ENCODE measurements at regions of chr11 and their contacts with region 1.

Region 1: GRCh38 chr11:14907411-14908213 is 15.6 kb upstream of the CYP2R1 start:
- DNase-seq: peak; percentile 74 to 81 (median 76)
- H3K4me3 ChIP-seq: no peak overlapping the region
- H3K4me3 Mint-ChIP-seq: peak overlapping the region in 4 of 8 donors; percentile 21 to 53 (median 40)
- H3K27ac ChIP-seq: no peak overlapping the region
- H3K27ac Mint-ChIP-seq: peak overlapping the region; percentile 6 to 94 (median 69)
- H3K4me1 ChIP-seq: peaks cover 29% of the 10 kb centered on the region
- H3K4me1 Mint-ChIP-seq: peaks cover 22 to 50% (median 34%) of the 10 kb centered on the region in 4 donors
- H3K27me3 ChIP-seq: no peaks in the 10 kb centered on the region
- H3K27me3 Mint-ChIP-seq: no peaks in the 10 kb centered on the region

Region 2: DNA sequence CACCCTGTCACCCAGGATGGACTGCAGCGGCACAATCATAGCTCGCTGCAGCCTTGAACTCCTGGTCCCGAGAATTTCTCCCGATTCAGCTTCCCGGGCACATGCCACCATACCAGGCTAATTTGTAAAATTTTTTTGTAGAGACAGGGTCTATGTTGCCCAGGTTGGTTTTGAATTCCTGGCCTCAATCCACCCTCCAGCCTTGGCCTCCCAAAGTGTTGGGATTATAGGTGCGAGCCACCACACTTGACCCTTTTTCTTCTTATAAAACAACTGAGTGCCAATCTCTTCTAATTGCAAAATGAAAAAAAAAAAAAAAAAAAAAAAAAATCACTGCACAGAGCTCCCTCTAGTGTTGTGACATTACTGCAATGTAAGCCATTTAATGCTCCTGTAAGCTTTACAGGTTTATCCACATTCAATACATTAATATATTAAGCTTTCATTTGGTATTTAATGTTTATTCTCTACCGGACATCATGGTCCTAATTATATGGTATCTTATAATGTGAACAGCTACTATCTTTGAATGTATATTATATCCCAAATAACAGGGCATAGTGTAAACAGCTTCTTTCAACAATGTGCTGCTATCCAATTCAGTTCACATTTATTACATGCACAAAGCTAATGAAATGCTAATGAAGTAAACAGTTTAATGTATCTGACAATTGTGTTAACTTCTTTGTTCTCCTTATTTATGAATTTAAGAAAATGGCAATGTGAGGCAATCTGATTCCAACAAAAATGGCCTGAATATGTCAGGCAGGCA is 452.6 kb before region 1 on chr11:
- CTCF ChIA-PET with region 1: interaction called, 19 read pairs
- POLR2A ChIA-PET with region 1: no interaction called
- intact Hi-C with region 1: no loop called
- DNase-seq: peak in 4 of 5 donors; percentile 14 to 29 (median 18)
- H3K4me3 ChIP-seq: no peak overlapping the region
- H3K4me3 Mint-ChIP-seq: no peak overlapping the region
- H3K27ac ChIP-seq: no peak overlapping the region
- H3K27ac Mint-ChIP-seq: peak overlapping the region in 4 of 7 donors; percentile 22 to 63 (median 41)
- H3K4me1 ChIP-seq: no peaks in the 10 kb centered on the region
- H3K4me1 Mint-ChIP-seq: peaks cover 0 to 3% (median 1%) of the 10 kb centered on the region in 4 donors
- H3K27me3 ChIP-seq: no peaks in the 10 kb centered on the region
- H3K27me3 Mint-ChIP-seq: no peaks in the 10 kb centered on the region

Region 3: GRCh38 chr11:14537134-14537599 is 370.4 kb before region 1 on chr11:
- CTCF ChIA-PET with region 1: interaction called, 57 read pairs
- POLR2A ChIA-PET with region 1: no interaction called
- intact Hi-C with region 1: loop called (anchors 1 kb)
- DNase-seq: peak; percentile 49 to 69 (median 65)
- H3K4me3 ChIP-seq: peak overlapping the region in 1 of 2 donors; percentile 23
- H3K4me3 Mint-ChIP-seq: peak overlapping the region; percentile 69 to 90 (median 82)
- H3K27ac ChIP-seq: peak overlapping the region; percentile 48
- H3K27ac Mint-ChIP-seq: peak overlapping the region; percentile 77 to 97 (median 92)
- H3K4me1 ChIP-seq: peaks cover 5% of the 10 kb centered on the region
- H3K4me1 Mint-ChIP-seq: peaks cover 3 to 14% (median 4%) of the 10 kb centered on the region in 4 donors
- H3K27me3 ChIP-seq: no peaks in the 10 kb centered on the region
- H3K27me3 Mint-ChIP-seq: no peaks in the 10 kb centered on the region

Region 4: DNA sequence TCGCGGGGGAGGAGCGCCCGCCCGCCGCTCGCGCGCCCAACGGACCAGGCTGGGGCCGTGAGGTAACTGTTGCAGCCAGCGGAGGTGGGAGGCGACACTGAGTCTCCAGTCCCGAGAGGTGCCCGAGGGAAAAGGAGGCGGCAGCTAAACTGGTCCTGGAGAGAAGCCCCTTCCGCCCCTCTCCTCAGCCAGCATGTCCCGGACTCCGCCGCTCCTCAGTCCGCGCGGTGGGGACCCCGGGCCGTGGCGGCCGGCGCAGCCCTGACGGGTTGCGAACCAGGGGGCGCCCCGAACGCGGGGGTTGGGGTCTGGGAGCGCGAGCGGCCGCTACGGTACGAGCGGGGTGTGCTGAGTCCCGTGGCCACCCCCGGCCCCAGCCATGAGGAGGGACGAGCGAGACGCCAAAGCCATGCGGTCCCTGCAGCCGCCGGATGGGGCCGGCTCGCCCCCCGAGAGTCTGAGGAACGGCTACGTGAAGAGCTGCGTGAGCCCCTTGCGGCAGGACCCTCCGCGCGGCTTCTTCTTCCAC is 263.9 kb before region 1 on chr11 and contains the start of gene PDE3B:
- CTCF ChIA-PET with region 1: interaction called, 37 read pairs
- POLR2A ChIA-PET with region 1: interaction called, 17 read pairs
- intact Hi-C with region 1: loop called (anchors 1 kb)
- DNase-seq: peak; percentile 65 to 71 (median 65)
- H3K4me3 ChIP-seq: peak within 1 kb of the TSS; percentile 89 to 95
- H3K4me3 Mint-ChIP-seq: peak within 1 kb of the TSS; percentile 91 to 97 (median 95)
- H3K27ac ChIP-seq: peak within 1 kb of the TSS; percentile 68
- H3K27ac Mint-ChIP-seq: peak within 1 kb of the TSS; percentile 79 to 94 (median 91)
- H3K4me1 ChIP-seq: peaks cover 65% of the 10 kb centered on the region
- H3K4me1 Mint-ChIP-seq: peaks cover 43 to 65% (median 54%) of the 10 kb centered on the region in 4 donors
- H3K27me3 ChIP-seq: no peaks in the 10 kb centered on the region
- H3K27me3 Mint-ChIP-seq: peaks cover 0 to 2% of the 10 kb centered on the region in 2 donors
- total RNA-seq, gene PDE3B: 219 to 222 TPM

Region 5: GRCh38 chr11:14892036-14892567 is 15.5 kb before region 1 on chr11 and contains the start of gene CYP2R1:
- CTCF ChIA-PET with region 1: interaction called, 143 read pairs
- POLR2A ChIA-PET with region 1: interaction called, 39 read pairs
- intact Hi-C with region 1: loop called (anchors 1 kb)
- DNase-seq: peak; percentile 88 to 92 (median 91)
- H3K4me3 ChIP-seq: peak within 1 kb of the TSS; percentile 91 to 96
- H3K4me3 Mint-ChIP-seq: peak within 1 kb of the TSS; percentile 90 to 99 (median 94)
- H3K27ac ChIP-seq: peak within 1 kb of the TSS; percentile 80
- H3K27ac Mint-ChIP-seq: peak within 1 kb of the TSS; percentile 94 to 99 (median 96)
- H3K4me1 ChIP-seq: peaks cover 36% of the 10 kb centered on the region
- H3K4me1 Mint-ChIP-seq: peaks cover 17 to 48% (median 34%) of the 10 kb centered on the region in 4 donors
- H3K27me3 ChIP-seq: no peaks in the 10 kb centered on the region
- H3K27me3 Mint-ChIP-seq: no peaks in the 10 kb centered on the region
- total RNA-seq, gene CYP2R1: 12.1 to 14.7 TPM

Region 6: DNA sequence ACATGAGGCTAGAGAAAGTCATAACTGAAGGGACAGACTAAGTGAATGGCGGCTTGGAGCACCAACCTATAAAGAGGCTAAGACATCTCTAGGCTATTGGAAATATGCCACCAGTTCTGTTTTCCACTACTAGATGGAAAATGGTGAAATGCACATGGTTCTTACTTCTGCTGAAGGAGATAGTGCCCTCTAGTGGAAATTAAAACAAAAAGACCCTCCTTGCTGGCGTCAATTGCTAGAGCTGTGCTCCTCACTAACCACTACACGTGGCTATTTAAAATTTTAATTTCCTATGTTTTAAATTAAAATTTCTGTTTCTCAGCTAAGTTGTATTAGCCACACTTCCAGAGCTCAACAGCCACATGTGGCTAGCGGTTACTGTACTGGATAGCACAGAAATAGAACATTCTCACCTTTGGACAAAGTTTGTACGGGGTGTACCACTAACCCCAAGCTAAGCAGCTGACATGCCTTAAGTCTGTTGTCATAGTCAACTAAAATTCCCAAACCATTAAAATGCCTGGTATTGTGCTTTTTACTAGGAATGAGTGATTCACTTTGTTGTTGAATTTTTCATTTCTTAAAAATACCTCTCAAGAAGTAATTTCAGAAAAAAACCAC is 98.6 kb after region 1 on chr11:
- CTCF ChIA-PET with region 1: interaction called, 131 read pairs
- POLR2A ChIA-PET with region 1: interaction called, 3 read pairs
- intact Hi-C with region 1: loop called (anchors 1 kb)
- DNase-seq: peak in 4 of 5 donors; percentile 30 to 48 (median 39)
- H3K4me3 ChIP-seq: no peak overlapping the region
- H3K4me3 Mint-ChIP-seq: no peak overlapping the region
- H3K27ac ChIP-seq: no peak overlapping the region
- H3K27ac Mint-ChIP-seq: no peak overlapping the region
- H3K4me1 ChIP-seq: no peaks in the 10 kb centered on the region
- H3K4me1 Mint-ChIP-seq: no peaks in the 10 kb centered on the region
- H3K27me3 ChIP-seq: no peaks in the 10 kb centered on the region
- H3K27me3 Mint-ChIP-seq: peaks cover 14 to 26% of the 10 kb centered on the region in 2 donors

Region 7: DNA sequence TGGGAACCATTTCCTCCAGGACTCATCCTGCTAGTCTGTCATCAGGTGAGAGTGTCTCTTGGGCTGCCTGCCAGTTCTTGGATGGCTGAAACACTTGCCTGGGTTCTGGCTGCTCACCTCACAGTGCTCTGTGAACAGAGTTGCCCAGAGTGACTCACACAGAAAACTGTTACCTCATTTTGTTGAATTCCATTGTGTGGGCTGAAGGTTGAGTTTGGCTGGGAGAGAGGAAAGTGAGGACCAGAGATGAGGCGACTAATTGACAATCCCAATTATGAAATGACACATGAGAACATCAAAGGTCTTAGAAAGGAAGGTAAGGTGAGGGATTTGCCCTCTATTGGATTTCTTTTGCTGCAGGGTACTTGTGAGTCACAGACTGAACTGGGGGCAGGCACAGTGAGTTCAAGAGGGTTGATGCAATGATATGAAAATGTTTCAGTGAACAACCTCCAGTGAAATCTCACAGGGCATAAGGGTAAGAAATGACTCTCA is 145.6 kb after region 1 on chr11:
- CTCF ChIA-PET with region 1: no interaction called
- POLR2A ChIA-PET with region 1: no interaction called
- intact Hi-C with region 1: no loop called
- DNase-seq: no peak
- H3K4me3 ChIP-seq: no peak overlapping the region
- H3K4me3 Mint-ChIP-seq: no peak overlapping the region
- H3K27ac ChIP-seq: no peak overlapping the region
- H3K27ac Mint-ChIP-seq: no peak overlapping the region
- H3K4me1 ChIP-seq: no peaks in the 10 kb centered on the region
- H3K4me1 Mint-ChIP-seq: no peaks in the 10 kb centered on the region
- H3K27me3 ChIP-seq: no peaks in the 10 kb centered on the region
- H3K27me3 Mint-ChIP-seq: peaks cover 5 to 7% of the 10 kb centered on the region in 2 donors